K562 (cell line): ENCODE measurements at regions of chr1 and their contacts with region 1.

Region 1: DNA sequence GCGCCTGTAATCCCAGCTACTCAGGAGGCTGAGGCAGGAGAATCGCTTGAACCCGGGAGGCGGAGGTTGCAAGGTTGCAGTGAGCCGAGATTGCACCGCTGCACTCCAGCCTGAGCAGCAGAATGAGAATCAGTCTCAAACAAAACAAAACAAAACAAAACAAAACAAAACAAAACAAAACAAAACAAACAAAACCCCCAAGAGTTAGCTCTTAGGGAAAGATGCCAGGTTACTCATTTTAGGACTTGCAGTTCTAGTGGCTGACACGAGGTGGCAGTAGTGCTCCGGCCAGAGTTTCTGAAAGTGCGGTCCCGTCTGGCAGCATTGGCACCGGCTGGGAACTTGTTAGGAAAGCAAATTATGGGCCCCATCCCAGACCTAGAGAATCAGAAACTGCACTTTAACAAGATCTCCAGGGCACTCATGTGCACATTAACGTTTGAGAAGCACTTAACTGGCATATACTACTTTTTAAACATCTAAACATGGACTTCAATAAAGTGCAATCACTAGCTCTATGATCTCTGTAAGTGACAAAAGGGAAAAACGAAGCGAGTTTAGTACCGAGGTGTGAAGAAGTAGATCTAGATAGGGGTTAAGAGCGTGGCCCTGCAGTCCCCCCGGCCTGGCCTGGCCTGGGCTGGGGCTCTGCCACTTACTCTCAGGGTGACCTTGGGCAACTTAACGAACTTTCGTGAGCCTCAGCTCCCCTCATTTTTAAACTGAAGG is 41.9 kb upstream of the TNFRSF1B start:
- DNase-seq: peak; percentile 63 to 79 (median 74)
- ATAC-seq: peak; percentile 69
- H3K4me3 ChIP-seq: no peak overlapping the region
- H3K27ac ChIP-seq: no peak overlapping the region
- H3K4me1 ChIP-seq: peaks cover 7 to 15% of the 10 kb centered on the region in 2 experiments; a peak in 4 of 5 replicates
- H3K27me3 ChIP-seq: no peaks in the 10 kb centered on the region
- CTCF ChIP-seq: peak; percentile 97 to 98 (median 97)
- EP300 ChIP-seq: no peak
- POLR2A ChIP-seq: no peak
- RAD21 ChIP-seq: peak; percentile 99 to 100

Region 2: GRCh38 chr1:12153181-12153785 is 28.4 kb after region 1 on chr1:
- CTCF ChIA-PET with region 1: no interaction called
- POLR2A ChIA-PET with region 1: interaction called, 11 read pairs
- in situ Hi-C with region 1: no loop called
- intact Hi-C with region 1: no loop called
- DNase-seq: no peak
- ATAC-seq: peak; percentile 75
- H3K4me3 ChIP-seq: no peak overlapping the region
- H3K27ac ChIP-seq: no peak overlapping the region
- H3K4me1 ChIP-seq: peaks cover 11 to 17% of the 10 kb centered on the region in 2 experiments
- H3K27me3 ChIP-seq: no peaks in the 10 kb centered on the region; a peak in 1 of 5 replicates
- CTCF ChIP-seq: no peak
- EP300 ChIP-seq: no peak
- POLR2A ChIP-seq: no peak
- RAD21 ChIP-seq: no peak

Region 3: GRCh38 chr1:12208764-12209494 is 84.1 kb after region 1 on chr1:
- CTCF ChIA-PET with region 1: interaction called, 195 read pairs
- POLR2A ChIA-PET with region 1: interaction called, 13 read pairs
- in situ Hi-C with region 1: loop called (anchors 5 kb)
- intact Hi-C with region 1: loop called (anchors 1 kb)
- DNase-seq: peak; percentile 85 to 90 (median 87)
- ATAC-seq: peak; percentile 91
- H3K4me3 ChIP-seq: no peak overlapping the region
- H3K27ac ChIP-seq: no peak overlapping the region
- H3K4me1 ChIP-seq: peaks cover 3 to 17% of the 10 kb centered on the region in 2 experiments; a peak in 4 of 5 replicates
- H3K27me3 ChIP-seq: no peaks in the 10 kb centered on the region
- CTCF ChIP-seq: peak; percentile 94 to 97 (median 96)
- EP300 ChIP-seq: no peak; the same call in 1 of the 2 replicates
- POLR2A ChIP-seq: peak; percentile 66; the same call in 1 of the 2 replicates
- RAD21 ChIP-seq: peak; percentile 98 to 99

Region 4: DNA sequence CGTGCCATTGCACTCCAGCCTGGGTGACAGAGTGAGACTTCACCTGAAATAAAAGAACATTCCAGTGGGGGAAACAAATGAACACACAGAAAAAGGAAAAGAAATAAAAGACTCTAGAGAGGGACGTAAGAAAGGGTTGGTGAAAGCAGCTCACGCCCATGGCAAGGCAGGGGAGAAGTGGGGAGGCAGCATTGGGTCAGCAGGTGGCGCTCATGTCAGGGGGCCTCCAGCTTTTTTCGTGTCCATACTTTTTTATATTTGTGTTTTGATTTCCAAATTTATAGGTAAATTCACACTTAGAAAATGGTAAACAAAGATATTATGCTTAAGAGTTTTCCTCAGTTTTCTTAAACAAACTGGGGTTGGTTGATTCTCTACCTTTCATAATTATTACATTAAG is 150.5 kb after region 1 on chr1:
- CTCF ChIA-PET with region 1: interaction called, 24 read pairs
- POLR2A ChIA-PET with region 1: interaction called, 3 read pairs
- in situ Hi-C with region 1: loop called (anchors 5 kb)
- intact Hi-C with region 1: loop called (anchors 2 kb)
- DNase-seq: peak; percentile 60 to 67 (median 65)
- ATAC-seq: peak; percentile 88
- H3K4me3 ChIP-seq: no peak overlapping the region
- H3K27ac ChIP-seq: no peak overlapping the region
- H3K4me1 ChIP-seq: no peaks in the 10 kb centered on the region
- H3K27me3 ChIP-seq: no peaks in the 10 kb centered on the region; a peak in 1 of 5 replicates
- CTCF ChIP-seq: peak; percentile 81 to 89 (median 86)
- EP300 ChIP-seq: no peak
- POLR2A ChIP-seq: no peak
- RAD21 ChIP-seq: peak; percentile 21 to 59

Region 5: DNA sequence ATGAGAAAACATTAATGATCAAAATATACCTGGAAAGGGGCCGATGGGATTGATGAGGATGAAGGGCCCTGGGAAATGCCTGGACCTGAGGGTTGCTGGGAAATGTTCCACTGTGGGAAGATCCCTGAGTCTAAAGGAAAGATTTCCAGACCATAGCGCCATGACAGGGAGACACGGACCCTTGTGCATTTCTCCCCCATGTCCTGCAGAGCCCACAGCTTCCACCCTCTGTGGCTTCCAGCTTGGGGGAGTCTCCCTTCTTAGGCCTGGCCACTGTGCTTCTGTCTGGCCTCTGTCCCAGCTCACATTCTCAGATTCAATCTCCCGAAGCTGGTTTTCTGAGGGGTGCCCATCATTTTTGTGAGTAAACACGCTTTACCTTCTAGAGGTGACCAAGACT is 647.7 kb after region 1 on chr1:
- CTCF ChIA-PET with region 1: no interaction called
- POLR2A ChIA-PET with region 1: no interaction called
- in situ Hi-C with region 1: loop called (anchors 5 kb)
- intact Hi-C with region 1: loop called (anchors 10 kb)
- DNase-seq: no peak
- ATAC-seq: no peak
- H3K4me3 ChIP-seq: no peak overlapping the region
- H3K27ac ChIP-seq: no peak overlapping the region
- H3K4me1 ChIP-seq: no peaks in the 10 kb centered on the region
- H3K27me3 ChIP-seq: peaks cover 13 to 49% of the 10 kb centered on the region in 2 experiments; a peak in 4 of 5 replicates
- CTCF ChIP-seq: no peak
- EP300 ChIP-seq: no peak
- POLR2A ChIP-seq: no peak
- RAD21 ChIP-seq: no peak